ENCODE measurements at regions of chr14 and their contacts with region 1.

Region 1: DNA sequence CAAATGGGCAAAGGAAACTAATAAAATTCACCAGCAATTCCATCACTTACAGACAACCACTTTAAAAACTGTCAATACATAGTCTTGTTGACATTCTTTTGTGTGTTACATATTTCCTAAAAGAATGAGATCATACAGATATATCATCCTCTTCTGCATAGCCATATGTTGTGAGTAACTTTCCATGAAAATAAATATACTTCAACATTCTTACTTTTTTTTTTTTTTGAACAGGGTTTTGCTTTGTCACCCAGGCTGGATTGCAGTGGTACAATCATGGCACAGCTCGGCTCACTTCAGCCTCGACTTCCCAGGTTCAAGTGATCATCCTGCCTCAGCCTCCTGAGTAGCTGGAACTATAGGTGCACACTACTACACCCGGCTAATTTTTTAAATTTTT is 20.9 kb downstream of the ZC2HC1C start:
- DNase-seq: peak; percentile 41
- H3K4me3 ChIP-seq: no peak overlapping the region
- H3K27ac ChIP-seq: 0 out of 2 replicates have a peak overlapping the region, but pooled peaks have one; percentile 3
- H3K4me1 ChIP-seq: no peaks in the 10 kb centered on the region
- H3K27me3 ChIP-seq: no peaks in the 10 kb centered on the region

Region 2: GRCh38 chr14:74913986-74914573 is 176.3 kb before region 1 on chr14:
- in situ Hi-C with region 1: loop called (anchors 10 kb)
- DNase-seq: peak; percentile 90
- H3K4me3 ChIP-seq: no peak overlapping the region
- H3K27ac ChIP-seq: no peak overlapping the region
- H3K4me1 ChIP-seq: no peaks in the 10 kb centered on the region
- H3K27me3 ChIP-seq: no peaks in the 10 kb centered on the region